Lower leg skin (tissue), 4 donors: ENCODE measurements at regions of chr7 and their contacts with region 1.

Region 1: GRCh38 chr7:89642173-89642572 is 512.1 kb upstream of the STEAP1 start:
- DNase-seq: no peak
- H3K4me3 ChIP-seq: no peak overlapping the region
- CTCF ChIP-seq: no peak
- POLR2A ChIP-seq: no peak

Region 2: GRCh38 chr7:89563597-89563996 is 78.6 kb before region 1 on chr7:
- intact Hi-C with region 1: no loop called
- DNase-seq: no peak
- H3K4me3 ChIP-seq: no peak overlapping the region
- CTCF ChIP-seq: no peak
- POLR2A ChIP-seq: no peak

Region 3: GRCh38 chr7:89695241-89695640 is 53.1 kb after region 1 on chr7:
- intact Hi-C with region 1: loop called (anchors 2 kb)
- DNase-seq: no peak
- H3K4me3 ChIP-seq: no peak overlapping the region
- CTCF ChIP-seq: no peak
- POLR2A ChIP-seq: no peak